Naive thymus-derived CD4-positive, alpha-beta T cell (primary cell): ENCODE measurements at regions of chr4 and their contacts with region 1.

Region 1: DNA sequence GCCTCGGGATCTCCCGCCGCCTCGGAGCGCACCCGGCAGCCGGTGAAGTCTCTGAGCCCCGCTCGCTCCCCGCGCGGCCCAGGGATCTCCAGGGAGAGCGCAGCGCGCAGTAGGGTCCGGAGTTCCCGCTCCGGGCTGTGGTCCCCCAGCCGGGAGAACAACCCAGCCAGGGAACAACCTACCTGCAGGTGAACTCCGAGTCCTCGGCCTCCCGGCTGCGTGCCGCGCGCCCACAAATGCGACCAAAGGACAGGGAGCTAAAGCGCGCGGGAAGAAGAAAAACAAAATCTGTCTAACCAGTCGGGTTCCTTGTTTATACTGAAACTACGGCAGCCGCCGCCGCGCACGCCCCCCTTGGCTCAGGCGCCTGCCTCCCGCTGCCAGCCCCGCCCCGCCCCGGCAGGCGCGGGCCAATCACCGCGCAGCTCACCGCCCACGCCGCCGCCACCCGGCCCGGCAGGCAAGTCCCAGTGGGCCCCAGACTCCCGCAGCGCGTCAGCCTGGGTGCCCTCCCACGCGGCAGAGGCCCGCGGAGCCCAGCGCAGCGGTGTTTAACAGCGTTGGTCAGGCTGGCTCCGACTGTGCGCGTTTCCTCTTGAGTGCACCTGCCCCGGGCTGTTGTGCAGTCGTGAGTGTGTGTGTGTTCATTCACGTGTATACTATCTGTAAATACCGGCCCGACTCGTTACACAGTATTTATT is at the start of gene RASGEF1B:
- DNase-seq: peak; percentile 95 to 98 (median 97)
- ATAC-seq: peak; percentile 93
- H3K4me3 ChIP-seq: peak within 1 kb of the TSS; percentile 96
- H3K4me3 Mint-ChIP-seq: peak within 1 kb of the TSS; percentile 91 to 98 (median 95)
- H3K27ac ChIP-seq: peak within 1 kb of the TSS; percentile 96
- H3K27ac Mint-ChIP-seq: peak within 1 kb of the TSS; percentile 87 to 100 (median 98)
- H3K4me1 ChIP-seq: peaks cover 13 to 18% of the 10 kb centered on the region in 2 donors
- H3K4me1 Mint-ChIP-seq: peaks cover 31 to 52% (median 40%) of the 10 kb centered on the region in 7 donors
- H3K27me3 ChIP-seq: no peaks in the 10 kb centered on the region
- H3K27me3 Mint-ChIP-seq: peaks cover 0 to 14% (median 0%) of the 10 kb centered on the region in 5 donors
- total RNA-seq, gene RASGEF1B: 1.1 to 82.5 (median 11.5) TPM

Region 2: GRCh38 chr4:80492761-80493160 is 979.0 kb before region 1 on chr4:
- CTCF ChIA-PET with region 1: no interaction called
- POLR2A ChIA-PET with region 1: no interaction called
- intact Hi-C with region 1: loop called in 1 of 2 experiments (anchors 5 kb)
- DNase-seq: peak in 7 of 9 donors; percentile 61 to 89 (median 83)
- ATAC-seq: peak; percentile 98
- H3K4me3 ChIP-seq: no peak overlapping the region
- H3K4me3 Mint-ChIP-seq: peak overlapping the region; percentile 53 to 87 (median 67)
- H3K27ac ChIP-seq: peak overlapping the region; percentile 25
- H3K27ac Mint-ChIP-seq: peak overlapping the region; percentile 92 to 99 (median 97)
- H3K4me1 ChIP-seq: peaks cover 36 to 43% of the 10 kb centered on the region in 2 donors
- H3K4me1 Mint-ChIP-seq: peaks cover 28 to 74% (median 69%) of the 10 kb centered on the region in 7 donors
- H3K27me3 ChIP-seq: no peaks in the 10 kb centered on the region
- H3K27me3 Mint-ChIP-seq: no peaks in the 10 kb centered on the region

Region 3: GRCh38 chr4:81106150-81106549 is 365.6 kb before region 1 on chr4:
- CTCF ChIA-PET with region 1: no interaction called
- POLR2A ChIA-PET with region 1: no interaction called
- intact Hi-C with region 1: no loop called
- DNase-seq: no peak
- ATAC-seq: no peak
- H3K4me3 ChIP-seq: no peak overlapping the region
- H3K4me3 Mint-ChIP-seq: no peak overlapping the region
- H3K27ac ChIP-seq: no peak overlapping the region
- H3K27ac Mint-ChIP-seq: no peak overlapping the region
- H3K4me1 ChIP-seq: no peaks in the 10 kb centered on the region
- H3K4me1 Mint-ChIP-seq: no peaks in the 10 kb centered on the region
- H3K27me3 ChIP-seq: no peaks in the 10 kb centered on the region
- H3K27me3 Mint-ChIP-seq: peaks cover 0 to 3% (median 0%) of the 10 kb centered on the region in 5 donors

Region 4: DNA sequence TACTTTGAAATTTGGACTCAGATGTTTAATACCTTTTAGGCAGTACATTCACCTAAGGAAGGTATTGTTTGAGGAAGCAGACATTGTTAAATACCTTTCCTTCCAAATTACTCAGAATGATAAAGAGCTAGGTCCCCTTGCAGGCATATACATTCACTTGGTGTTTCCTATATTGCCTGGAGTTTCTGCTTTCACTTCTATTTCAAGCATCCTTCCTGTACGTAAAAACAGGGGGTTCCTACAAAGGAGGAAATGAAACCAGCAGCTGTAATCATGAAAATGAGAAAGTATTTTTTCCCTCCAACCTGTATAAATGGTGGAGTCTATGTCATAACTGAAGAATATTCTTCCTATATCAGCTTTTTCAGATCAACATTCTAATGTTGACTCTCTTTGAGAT is 90.4 kb after region 1 on chr4:
- CTCF ChIA-PET with region 1: interaction called, 4 read pairs
- POLR2A ChIA-PET with region 1: interaction called, 5 read pairs
- intact Hi-C with region 1: loop called (anchors 1 kb)
- DNase-seq: peak in 7 of 9 donors; percentile 28 to 50 (median 40)
- ATAC-seq: peak; percentile 94
- H3K4me3 ChIP-seq: no peak overlapping the region
- H3K4me3 Mint-ChIP-seq: peak overlapping the region in 7 of 10 donors; percentile 27 to 64 (median 55)
- H3K27ac ChIP-seq: peak overlapping the region; percentile 42
- H3K27ac Mint-ChIP-seq: peak overlapping the region; percentile 5 to 86 (median 77)
- H3K4me1 ChIP-seq: peaks cover 0 to 5% of the 10 kb centered on the region in 2 donors
- H3K4me1 Mint-ChIP-seq: peaks cover 7 to 14% (median 13%) of the 10 kb centered on the region in 7 donors
- H3K27me3 ChIP-seq: no peaks in the 10 kb centered on the region
- H3K27me3 Mint-ChIP-seq: no peaks in the 10 kb centered on the region

Region 5: GRCh38 chr4:81736324-81736723 is 264.6 kb after region 1 on chr4:
- CTCF ChIA-PET with region 1: no interaction called
- POLR2A ChIA-PET with region 1: no interaction called
- intact Hi-C with region 1: loop called in 1 of 2 experiments (anchors 1 kb)
- DNase-seq: no peak
- ATAC-seq: no peak
- H3K4me3 ChIP-seq: no peak overlapping the region
- H3K4me3 Mint-ChIP-seq: no peak overlapping the region
- H3K27ac ChIP-seq: no peak overlapping the region
- H3K27ac Mint-ChIP-seq: no peak overlapping the region
- H3K4me1 ChIP-seq: no peaks in the 10 kb centered on the region
- H3K4me1 Mint-ChIP-seq: peaks cover 0 to 4% (median 0%) of the 10 kb centered on the region in 7 donors
- H3K27me3 ChIP-seq: no peaks in the 10 kb centered on the region
- H3K27me3 Mint-ChIP-seq: peaks cover 0 to 2% (median 0%) of the 10 kb centered on the region in 5 donors

Region 6: GRCh38 chr4:82123934-82124333 is 652.2 kb after region 1 on chr4:
- CTCF ChIA-PET with region 1: no interaction called
- POLR2A ChIA-PET with region 1: no interaction called
- intact Hi-C with region 1: loop called in 1 of 2 experiments (anchors 1 kb)
- DNase-seq: peak in 6 of 9 donors; percentile 22 to 49 (median 28)
- ATAC-seq: peak; percentile 47
- H3K4me3 ChIP-seq: no peak overlapping the region
- H3K4me3 Mint-ChIP-seq: peak overlapping the region in 3 of 10 donors; percentile 2 to 29 (median 5)
- H3K27ac ChIP-seq: no peak overlapping the region
- H3K27ac Mint-ChIP-seq: peak overlapping the region in 2 of 9 donors; percentile 40 to 80
- H3K4me1 ChIP-seq: no peaks in the 10 kb centered on the region
- H3K4me1 Mint-ChIP-seq: peaks cover 0 to 17% (median 5%) of the 10 kb centered on the region in 7 donors
- H3K27me3 ChIP-seq: no peaks in the 10 kb centered on the region
- H3K27me3 Mint-ChIP-seq: peaks cover 0 to 3% (median 0%) of the 10 kb centered on the region in 5 donors

Region 7: GRCh38 chr4:82360298-82361177 is 888.8 kb after region 1 on chr4:
- CTCF ChIA-PET with region 1: no interaction called
- POLR2A ChIA-PET with region 1: no interaction called
- intact Hi-C with region 1: loop called in 1 of 2 experiments (anchors 5 kb)
- DNase-seq: peak in 6 of 9 donors; percentile 17 to 33 (median 31)
- ATAC-seq: peak; percentile 70
- H3K4me3 ChIP-seq: no peak overlapping the region
- H3K4me3 Mint-ChIP-seq: peak overlapping the region in 7 of 10 donors; percentile 0 to 56 (median 36)
- H3K27ac ChIP-seq: peak overlapping the region; percentile 18
- H3K27ac Mint-ChIP-seq: peak overlapping the region in 8 of 9 donors; percentile 34 to 85 (median 54)
- H3K4me1 ChIP-seq: peaks cover 62 to 74% of the 10 kb centered on the region in 2 donors
- H3K4me1 Mint-ChIP-seq: peaks cover 64 to 98% (median 89%) of the 10 kb centered on the region in 7 donors
- H3K27me3 ChIP-seq: no peaks in the 10 kb centered on the region
- H3K27me3 Mint-ChIP-seq: no peaks in the 10 kb centered on the region

Region 8: DNA sequence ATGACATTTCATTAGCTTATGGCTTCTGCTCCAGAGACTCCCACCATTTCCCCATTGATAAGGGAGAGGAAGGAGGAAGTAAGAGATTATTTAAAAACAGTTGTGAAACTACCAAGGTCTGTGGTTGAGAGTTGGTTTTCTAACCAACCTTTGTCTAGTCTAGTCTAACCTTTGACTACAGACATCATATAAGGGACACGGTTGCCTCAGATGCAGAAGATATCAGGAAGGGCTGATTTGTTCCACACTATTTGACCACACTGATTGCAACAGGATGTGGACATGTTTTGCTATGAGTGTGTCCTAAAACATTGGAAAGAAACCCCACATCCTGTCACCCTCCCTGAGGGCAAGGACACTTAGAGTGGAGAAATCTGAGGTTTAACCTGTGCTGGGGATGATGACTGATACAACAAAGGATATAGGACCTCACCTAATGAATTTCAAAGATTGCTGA is 1759.9 kb after region 1 on chr4:
- CTCF ChIA-PET with region 1: no interaction called
- POLR2A ChIA-PET with region 1: no interaction called
- intact Hi-C with region 1: loop called in 1 of 2 experiments (anchors 10 kb)
- DNase-seq: no peak
- ATAC-seq: peak; percentile 78
- H3K4me3 ChIP-seq: no peak overlapping the region
- H3K4me3 Mint-ChIP-seq: peak overlapping the region in 7 of 10 donors; percentile 13 to 60 (median 45)
- H3K27ac ChIP-seq: no peak overlapping the region
- H3K27ac Mint-ChIP-seq: peak overlapping the region; percentile 50 to 86 (median 72)
- H3K4me1 ChIP-seq: peaks cover 29 to 34% of the 10 kb centered on the region in 2 donors
- H3K4me1 Mint-ChIP-seq: peaks cover 44 to 62% (median 49%) of the 10 kb centered on the region in 7 donors
- H3K27me3 ChIP-seq: no peaks in the 10 kb centered on the region
- H3K27me3 Mint-ChIP-seq: peaks cover 0 to 32% (median 0%) of the 10 kb centered on the region in 5 donors